Right ventricle myocardium superior (tissue), 1 donor: ENCODE measurements at regions of chr3 and their contacts with region 1.

Region 1: GRCh38 chr3:127970966-127971592 is 56.0 kb downstream of the KBTBD12 start:
- DNase-seq: no peak
- ATAC-seq: peak; percentile 84

Region 2: DNA sequence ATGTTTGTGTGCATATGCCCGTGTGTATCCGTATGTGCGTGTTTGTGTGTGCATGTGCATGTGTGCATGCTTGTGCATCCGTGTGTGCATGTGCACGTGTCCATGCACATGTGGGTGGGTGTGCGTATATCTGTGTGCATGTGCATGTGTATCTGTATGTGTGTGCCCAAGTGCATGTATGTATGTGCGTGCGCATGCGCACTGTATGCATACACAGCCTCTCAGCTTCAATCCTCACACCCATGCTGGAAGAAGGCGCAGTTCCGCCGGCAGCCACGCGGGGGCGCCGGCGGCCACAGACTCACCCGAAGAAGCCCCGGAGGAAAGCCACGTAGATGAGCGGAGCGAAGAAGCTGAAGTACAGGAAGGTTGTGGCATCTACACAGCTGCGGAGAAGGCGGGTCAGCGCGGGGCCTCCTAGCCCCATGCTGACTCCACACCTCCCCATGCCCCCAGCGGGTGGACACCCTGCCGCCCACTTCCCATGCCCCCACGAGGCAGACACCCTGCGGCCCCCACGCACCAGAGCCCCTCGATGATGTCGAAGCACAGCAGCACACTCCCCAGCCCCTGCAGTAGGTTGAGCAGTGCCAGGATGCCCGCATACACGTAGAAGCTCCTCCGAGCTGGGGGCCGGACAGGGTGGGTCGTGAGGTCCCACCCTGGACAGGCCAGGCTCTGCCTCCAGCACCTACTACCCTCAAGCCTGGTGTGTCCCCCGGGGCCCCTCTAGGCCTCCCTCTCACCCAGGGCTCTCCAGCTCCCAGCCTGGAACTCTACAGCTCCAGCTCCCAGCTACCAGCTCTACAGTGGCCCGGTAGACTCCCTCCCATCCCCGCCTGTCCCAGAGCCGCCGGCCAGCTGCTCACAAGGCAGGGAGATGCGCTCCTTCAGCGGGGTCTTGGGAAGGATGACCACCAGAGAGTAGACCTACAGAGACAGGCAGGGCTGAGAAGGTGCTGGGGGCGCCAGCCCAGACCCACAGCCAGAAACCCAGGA is 395.9 kb before region 1 on chr3:
- intact Hi-C with region 1: loop called (anchors 10 kb)
- DNase-seq: peak; percentile 92
- ATAC-seq: peak; percentile 92

Region 3: DNA sequence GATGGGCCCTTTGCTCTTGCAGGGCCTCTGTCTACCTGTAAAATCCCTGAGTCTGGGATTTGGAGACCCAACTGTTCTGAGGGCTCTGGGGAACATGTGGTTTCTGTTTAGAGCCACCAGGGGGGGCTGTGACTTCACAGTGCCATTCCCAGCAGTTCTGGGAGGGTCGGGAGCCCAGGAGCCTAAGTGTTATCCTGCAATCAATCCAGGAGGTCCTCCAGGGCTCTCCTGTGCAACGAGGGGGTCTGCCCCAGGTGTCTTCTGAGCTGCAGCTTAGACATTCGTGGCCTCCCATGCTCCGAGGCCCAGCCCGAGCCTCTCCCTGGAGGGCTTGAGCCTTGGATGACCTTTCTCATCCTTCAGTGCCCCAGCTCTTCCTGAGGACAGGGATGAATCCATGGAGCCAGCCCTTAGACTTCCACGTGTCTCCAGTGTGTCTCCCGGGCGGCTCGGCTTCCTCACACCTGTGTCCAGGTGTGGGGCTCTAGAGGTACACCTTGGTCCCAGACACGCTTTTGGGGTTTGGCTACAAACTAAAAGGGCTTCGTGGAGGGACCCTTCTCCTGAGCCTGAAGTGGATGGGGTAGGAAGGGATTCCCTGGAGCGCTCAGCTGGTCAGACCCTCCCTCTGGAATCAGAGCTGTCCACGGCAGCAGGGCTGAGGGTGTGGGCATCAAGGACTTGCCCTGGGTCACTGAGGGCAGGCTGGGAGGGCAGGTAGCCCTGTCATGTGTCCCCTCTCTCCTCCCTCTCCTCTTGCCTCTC is 318.7 kb before region 1 on chr3:
- intact Hi-C with region 1: loop called (anchors 5 kb)
- DNase-seq: peak; percentile 61
- ATAC-seq: peak; percentile 93